IMR-90 (cell line): ENCODE measurements at regions of chr5 and their contacts with region 1.

Region 1: DNA sequence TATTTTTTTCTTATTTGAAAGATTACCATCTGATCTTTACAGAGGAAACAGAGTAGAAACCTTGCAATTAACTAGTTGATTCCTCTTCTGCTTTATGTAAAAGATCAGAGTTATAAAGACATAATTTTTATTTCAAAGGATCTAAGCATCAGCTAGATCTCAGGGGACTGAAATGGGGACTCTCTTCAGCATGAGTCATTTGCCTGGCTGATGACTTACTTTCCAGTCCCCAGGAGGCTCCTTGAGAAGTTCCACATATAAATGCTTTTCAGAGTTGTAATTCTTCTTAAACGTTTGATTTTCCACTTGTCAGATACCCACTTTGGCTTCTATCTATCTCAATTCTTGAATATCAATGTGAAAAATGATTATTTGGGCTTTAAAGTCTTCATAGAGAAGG is 389.4 kb downstream of the RAB3C start:
- DNase-seq: peak; percentile 3
- ATAC-seq: no peak
- H3K4me3 ChIP-seq: no peak overlapping the region
- H3K27ac ChIP-seq: no peak overlapping the region
- H3K4me1 ChIP-seq: no peaks in the 10 kb centered on the region
- H3K27me3 ChIP-seq: no peaks in the 10 kb centered on the region
- CTCF ChIP-seq: no peak
- POLR2A ChIP-seq: no peak
- RAD21 ChIP-seq: no peak

Region 2: GRCh38 chr5:58615972-58616371 is 356.3 kb before region 1 on chr5:
- CTCF ChIA-PET with region 1: no interaction called
- POLR2A ChIA-PET with region 1: no interaction called
- dilution Hi-C with region 1: no loop called
- in situ Hi-C with region 1: no loop called
- intact Hi-C with region 1: no loop called
- DNase-seq: no peak
- ATAC-seq: no peak
- H3K4me3 ChIP-seq: no peak overlapping the region
- H3K27ac ChIP-seq: no peak overlapping the region
- H3K4me1 ChIP-seq: no peaks in the 10 kb centered on the region
- H3K27me3 ChIP-seq: no peaks in the 10 kb centered on the region
- CTCF ChIP-seq: no peak
- POLR2A ChIP-seq: no peak
- RAD21 ChIP-seq: no peak

Region 3: GRCh38 chr5:59008816-59009473 is 36.6 kb after region 1 on chr5:
- CTCF ChIA-PET with region 1: no interaction called
- POLR2A ChIA-PET with region 1: no interaction called
- dilution Hi-C with region 1: no loop called
- in situ Hi-C with region 1: no loop called
- intact Hi-C with region 1: no loop called
- DNase-seq: no peak
- ATAC-seq: no peak
- H3K4me3 ChIP-seq: no peak overlapping the region
- H3K27ac ChIP-seq: no peak overlapping the region
- H3K4me1 ChIP-seq: peaks cover 3% of the 10 kb centered on the region; the same call in 1 of the 2 replicates
- H3K27me3 ChIP-seq: no peaks in the 10 kb centered on the region
- CTCF ChIP-seq: no peak
- POLR2A ChIP-seq: no peak
- RAD21 ChIP-seq: no peak

Region 4: GRCh38 chr5:60843936-60844905 is 1871.9 kb after region 1 on chr5 and contains the start of gene ELOVL7:
- CTCF ChIA-PET with region 1: no interaction called
- POLR2A ChIA-PET with region 1: no interaction called
- dilution Hi-C with region 1: no loop called
- in situ Hi-C with region 1: no loop called
- intact Hi-C with region 1: loop called (anchors 5 kb)
- DNase-seq: peak; percentile 29
- ATAC-seq: peak; percentile 93
- H3K4me3 ChIP-seq: peak within 1 kb of the TSS; percentile 79
- H3K27ac ChIP-seq: no peak within 1 kb of the TSS
- H3K4me1 ChIP-seq: no peaks in the 10 kb centered on the region; the same call in 1 of the 2 replicates
- H3K27me3 ChIP-seq: peaks cover 49% of the 10 kb centered on the region
- CTCF ChIP-seq: 0 out of 2 replicates have a peak, but pooled peaks have one; percentile 27
- POLR2A ChIP-seq: no peak
- RAD21 ChIP-seq: no peak
- total RNA-seq, gene ELOVL7: 0.18 TPM in 1 of 2 replicates, not detected in the other